ENCODE measurements at regions of chr11 and their contacts with region 1.

Region 1: GRCh38 chr11:124633355-124633754 is 10.7 kb downstream of the TBRG1 start:
- DNase-seq: peak; percentile 22 to 57 (median 54)
- H3K4me3 ChIP-seq: no peak overlapping the region
- H3K27ac ChIP-seq: no peak overlapping the region
- H3K4me1 ChIP-seq: no peaks in the 10 kb centered on the region
- H3K27me3 ChIP-seq: no peaks in the 10 kb centered on the region

Region 2: DNA sequence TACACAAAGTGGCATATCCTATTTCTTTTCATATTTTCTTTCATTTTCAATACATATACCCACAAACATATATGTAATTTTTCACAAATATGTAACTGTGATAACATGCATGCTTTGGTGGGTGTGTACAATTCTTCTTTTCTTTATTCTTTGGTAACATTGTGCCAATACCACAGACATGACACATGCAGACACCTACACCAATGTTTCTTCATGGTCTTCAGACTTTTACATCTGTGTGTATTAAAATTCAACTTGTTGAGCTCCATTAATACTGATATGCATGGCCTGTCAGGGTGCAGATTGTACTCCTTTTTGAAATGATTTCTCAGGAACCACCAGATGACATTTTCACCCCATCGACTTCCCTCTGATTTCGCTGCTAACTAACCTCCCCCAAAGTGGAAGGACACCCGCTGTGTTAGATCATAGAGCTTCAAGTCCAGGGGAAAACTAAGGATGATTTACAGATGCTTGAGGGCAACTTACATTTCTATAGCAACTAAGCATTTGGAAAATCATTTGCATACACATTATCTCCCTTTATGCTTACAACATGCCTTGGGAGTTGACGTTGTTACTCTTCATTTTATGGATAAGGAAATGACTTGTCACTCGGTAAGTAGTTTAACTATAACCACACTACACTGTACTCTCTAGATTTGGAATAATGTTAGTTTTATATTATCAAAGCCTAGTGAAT is 32.6 kb before region 1 on chr11:
- CTCF ChIA-PET with region 1: no interaction called
- POLR2A ChIA-PET with region 1: no interaction called
- DNase-seq: no peak
- H3K4me3 ChIP-seq: no peak overlapping the region
- H3K27ac ChIP-seq: no peak overlapping the region
- H3K4me1 ChIP-seq: peaks cover 0 to 9% (median 4%) of the 10 kb centered on the region in 4 experiments
- H3K27me3 ChIP-seq: peaks cover 0 to 3% (median 0%) of the 10 kb centered on the region in 5 experiments

Region 3: GRCh38 chr11:124622531-124623451 is 10.6 kb before region 1 on chr11 and contains the start of gene TBRG1:
- CTCF ChIA-PET with region 1: interaction called, 24 read pairs
- POLR2A ChIA-PET with region 1: interaction called, 3 read pairs
- DNase-seq: peak; percentile 87 to 93 (median 91)
- H3K4me3 ChIP-seq: peak within 1 kb of the TSS; percentile 86 to 97 (median 93)
- H3K27ac ChIP-seq: peak within 1 kb of the TSS; percentile 90 to 94
- H3K4me1 ChIP-seq: peaks cover 8 to 19% (median 16%) of the 10 kb centered on the region in 4 experiments
- H3K27me3 ChIP-seq: peaks cover 0 to 2% (median 0%) of the 10 kb centered on the region in 5 experiments

Region 4: DNA sequence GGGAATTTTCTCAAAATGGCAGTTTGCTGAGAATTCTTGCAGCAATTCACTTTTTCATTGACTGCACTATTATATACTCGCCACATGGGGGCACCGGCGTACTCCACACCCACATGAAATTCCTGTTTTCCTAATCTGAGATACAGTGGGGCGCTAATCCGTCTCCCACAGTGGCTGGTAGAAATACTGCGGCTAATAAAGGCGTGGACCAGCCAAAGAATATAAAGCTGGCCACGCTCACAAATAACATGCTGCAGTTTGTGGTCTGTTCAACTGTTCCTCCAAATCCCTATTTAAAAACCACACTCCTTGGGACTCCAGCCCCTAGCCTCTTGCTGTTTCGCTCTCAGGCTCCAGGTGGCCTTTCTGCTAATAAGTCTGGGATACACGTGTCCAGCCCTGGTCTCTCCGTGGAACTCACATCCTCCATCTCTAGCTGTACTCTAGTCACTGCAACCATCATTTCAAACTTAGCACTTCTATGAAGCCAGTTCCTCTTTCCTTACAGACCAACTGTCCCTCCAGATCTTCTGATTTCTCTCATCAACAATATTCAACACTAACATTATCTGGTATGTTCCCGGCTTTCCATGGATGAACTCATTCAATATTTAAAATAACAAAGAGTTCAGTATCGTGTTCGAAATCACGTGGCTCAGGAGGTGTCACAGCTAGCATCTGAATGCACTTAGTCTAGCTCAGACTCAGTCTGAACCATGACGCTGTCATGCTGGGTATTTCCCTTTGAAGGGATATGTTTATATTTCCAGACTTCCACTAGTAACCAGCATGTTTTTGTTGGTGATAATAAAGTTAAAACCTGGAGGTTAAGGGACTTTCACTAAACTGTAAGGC is 11.3 kb after region 1 on chr11:
- CTCF ChIA-PET with region 1: interaction called, 64 read pairs
- POLR2A ChIA-PET with region 1: no interaction called
- DNase-seq: peak; percentile 60 to 69 (median 61)
- H3K4me3 ChIP-seq: peak overlapping the region in 2 of 7 experiments; percentile 4 to 48
- H3K27ac ChIP-seq: no peak overlapping the region
- H3K4me1 ChIP-seq: peaks cover 0 to 29% (median 13%) of the 10 kb centered on the region in 4 experiments
- H3K27me3 ChIP-seq: no peaks in the 10 kb centered on the region

Measured in common myeloid progenitor, CD34-positive (primary cell).